ENCODE measurements at regions of chr17 and their contacts with region 1.

Region 1: GRCh38 chr17:77602062-77602746 is 356.3 kb upstream of the TNRC6C start:
- DNase-seq: peak; percentile 68 to 80
- ATAC-seq: peak; percentile 91 to 96 (median 94)
- H3K4me3 ChIP-seq: no peak overlapping the region
- H3K27ac ChIP-seq: peak overlapping the region; percentile 83 to 97 (median 90)
- H3K4me1 ChIP-seq: peaks cover 18 to 36% (median 31%) of the 10 kb centered on the region in 9 donors
- H3K27me3 ChIP-seq: no peaks in the 10 kb centered on the region
- CTCF ChIP-seq: no peak

Region 2: GRCh38 chr17:76887802-76888201 is 714.4 kb before region 1 on chr17:
- intact Hi-C with region 1: no loop called
- DNase-seq: no peak
- ATAC-seq: no peak
- H3K4me3 ChIP-seq: no peak overlapping the region
- H3K27ac ChIP-seq: no peak overlapping the region
- H3K4me1 ChIP-seq: no peaks in the 10 kb centered on the region
- H3K27me3 ChIP-seq: peaks cover 0 to 49% (median 29%) of the 10 kb centered on the region in 7 donors
- CTCF ChIP-seq: no peak

Region 3: DNA sequence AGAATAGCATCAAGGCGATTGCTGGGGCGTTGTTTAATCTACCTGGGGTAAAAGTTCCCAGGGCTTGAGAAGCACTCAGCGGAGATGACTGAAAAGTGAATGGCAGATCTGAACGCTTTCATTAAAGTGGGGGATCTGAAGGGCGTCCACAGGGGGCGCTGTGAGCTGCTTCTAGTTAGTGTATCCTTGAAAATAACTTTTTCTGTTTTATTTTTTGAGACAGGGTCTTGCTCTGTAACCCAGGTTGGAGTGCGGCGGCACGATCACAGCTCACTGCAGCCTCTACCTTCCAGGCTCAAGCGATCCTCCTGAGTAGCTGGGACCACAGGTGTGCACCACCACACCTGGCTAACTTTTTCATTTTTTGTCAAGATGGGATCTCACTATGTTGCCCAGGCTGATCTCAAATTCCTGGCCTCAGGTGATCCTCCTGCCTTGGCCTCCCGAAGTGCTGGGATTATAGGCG is 101.1 kb before region 1 on chr17:
- intact Hi-C with region 1: no loop called
- DNase-seq: no peak
- ATAC-seq: no peak
- H3K4me3 ChIP-seq: no peak overlapping the region
- H3K27ac ChIP-seq: no peak overlapping the region
- H3K4me1 ChIP-seq: peaks cover 0 to 8% (median 0%) of the 10 kb centered on the region in 9 donors
- H3K27me3 ChIP-seq: no peaks in the 10 kb centered on the region
- CTCF ChIP-seq: peak in 6 of 9 donors; percentile 23 to 61 (median 46)

Region 4: DNA sequence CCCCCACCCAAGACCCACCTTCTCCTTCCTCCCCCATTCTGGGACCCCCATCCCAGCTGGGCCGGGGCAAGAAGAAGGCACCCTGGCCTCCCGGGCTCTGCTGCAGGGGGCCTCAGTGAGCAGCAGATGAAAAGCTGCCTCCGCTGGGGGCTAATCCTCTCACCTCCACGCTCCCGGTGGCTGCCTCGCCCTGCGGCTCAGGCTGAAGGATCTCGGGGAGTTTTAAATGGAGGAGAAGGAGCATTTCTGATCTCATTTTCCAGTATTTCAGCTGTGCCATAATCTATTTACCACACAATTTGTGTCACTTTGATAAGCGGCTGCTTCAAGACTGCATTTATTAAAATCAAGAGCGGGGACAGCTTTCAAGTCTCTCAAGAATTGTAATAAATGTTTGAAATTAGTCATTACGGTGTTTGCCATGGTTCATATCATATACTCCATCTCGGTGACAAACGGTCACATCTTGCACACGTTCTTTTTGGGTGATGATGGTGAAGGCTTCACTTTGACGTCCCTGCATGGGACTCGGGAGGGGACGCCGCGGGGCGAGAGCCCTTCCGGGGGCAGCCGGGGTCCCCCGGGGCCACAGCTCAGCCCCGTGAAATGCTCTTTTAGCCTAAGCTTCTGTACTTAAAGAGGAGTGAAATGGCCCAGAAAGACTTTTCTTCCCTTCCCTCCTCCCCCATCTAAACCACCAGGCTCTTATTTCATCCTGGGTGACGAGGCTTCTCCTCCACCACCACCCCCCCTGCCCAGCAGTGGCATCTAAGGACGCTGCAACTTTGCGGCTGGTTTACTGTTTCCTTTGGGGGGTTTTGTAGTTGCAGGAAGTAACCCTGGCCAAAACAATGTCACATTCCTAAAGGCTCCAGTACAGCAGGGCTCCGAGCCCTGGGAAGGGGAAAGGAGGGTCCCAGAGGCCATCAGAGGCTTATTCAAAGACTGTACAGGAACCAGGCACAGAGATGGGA is 43.2 kb after region 1 on chr17:
- intact Hi-C with region 1: no loop called
- DNase-seq: no peak
- ATAC-seq: peak in 4 of 8 donors; percentile 16 to 46 (median 32)
- H3K4me3 ChIP-seq: peak overlapping the region in 4 of 10 donors; percentile 4 to 31 (median 20)
- H3K27ac ChIP-seq: no peak overlapping the region
- H3K4me1 ChIP-seq: peaks cover 0 to 10% (median 0%) of the 10 kb centered on the region in 9 donors
- H3K27me3 ChIP-seq: no peaks in the 10 kb centered on the region
- CTCF ChIP-seq: peak in 2 of 9 donors; percentile 10 to 29

Region 5: GRCh38 chr17:77677211-77677610 is 75.0 kb after region 1 on chr17:
- intact Hi-C with region 1: loop called in 2 of 10 experiments (anchors 5 kb)
- DNase-seq: peak; percentile 36 to 40
- ATAC-seq: peak in 5 of 8 donors; percentile 31 to 65 (median 62)
- H3K4me3 ChIP-seq: peak overlapping the region in 2 of 10 donors; percentile 14 to 23
- H3K27ac ChIP-seq: peak overlapping the region in 7 of 10 donors; percentile 20 to 75 (median 50)
- H3K4me1 ChIP-seq: peaks cover 11 to 47% (median 27%) of the 10 kb centered on the region in 9 donors
- H3K27me3 ChIP-seq: no peaks in the 10 kb centered on the region
- CTCF ChIP-seq: no peak

Region 6: GRCh38 chr17:77724876-77725615 is 122.8 kb after region 1 on chr17:
- intact Hi-C with region 1: loop called in 1 of 10 experiments (anchors 5 kb)
- DNase-seq: no peak
- ATAC-seq: no peak
- H3K4me3 ChIP-seq: no peak overlapping the region
- H3K27ac ChIP-seq: no peak overlapping the region
- H3K4me1 ChIP-seq: peaks cover 0 to 31% (median 11%) of the 10 kb centered on the region in 9 donors
- H3K27me3 ChIP-seq: no peaks in the 10 kb centered on the region
- CTCF ChIP-seq: no peak

Measured in heart right ventricle (tissue), 16 donors.